PC-9 (cell line): ENCODE measurements at regions of chr2 and their contacts with region 1.

Region 1: DNA sequence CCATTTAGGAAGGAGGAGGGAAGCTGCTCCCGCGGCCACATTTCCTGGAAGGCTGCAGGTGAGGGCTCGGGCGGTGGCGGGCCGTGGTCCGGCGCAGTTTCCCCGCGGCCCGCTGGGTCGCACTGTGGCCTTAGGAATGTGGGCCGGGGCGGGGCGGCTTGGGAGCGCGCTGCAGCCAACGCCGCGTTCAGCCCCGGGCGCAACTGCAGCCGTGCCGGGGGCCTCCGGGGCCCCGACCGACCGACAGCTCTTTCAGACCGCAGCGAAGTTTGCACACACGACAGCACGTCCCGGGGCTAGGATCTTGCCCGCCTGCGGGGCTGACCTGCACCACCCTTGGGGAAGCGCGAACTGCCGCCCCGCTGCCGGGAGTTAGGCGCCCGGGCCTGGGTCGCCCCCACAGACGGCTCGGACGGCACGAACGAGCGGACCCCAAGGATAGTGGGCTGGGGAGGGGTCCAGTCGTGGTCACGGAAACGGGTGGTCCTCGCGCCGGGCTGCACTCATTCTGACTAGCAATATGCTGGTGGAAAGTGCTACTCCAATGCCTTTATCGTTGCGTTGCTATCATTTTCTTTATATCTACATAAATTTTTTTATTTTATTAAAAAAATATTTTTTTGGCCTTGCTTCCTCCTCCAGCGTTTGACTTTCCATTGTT is 69.9 kb upstream of the DLX2 start:
- DNase-seq: peak; percentile 75 to 98
- H3K4me3 ChIP-seq: peak overlapping the region; percentile 76
- H3K27ac ChIP-seq: no peak overlapping the region
- H3K4me1 ChIP-seq: peaks cover 17% of the 10 kb centered on the region
- H3K27me3 ChIP-seq: no peaks in the 10 kb centered on the region
- CTCF ChIP-seq: peak; percentile 98

Region 2: DNA sequence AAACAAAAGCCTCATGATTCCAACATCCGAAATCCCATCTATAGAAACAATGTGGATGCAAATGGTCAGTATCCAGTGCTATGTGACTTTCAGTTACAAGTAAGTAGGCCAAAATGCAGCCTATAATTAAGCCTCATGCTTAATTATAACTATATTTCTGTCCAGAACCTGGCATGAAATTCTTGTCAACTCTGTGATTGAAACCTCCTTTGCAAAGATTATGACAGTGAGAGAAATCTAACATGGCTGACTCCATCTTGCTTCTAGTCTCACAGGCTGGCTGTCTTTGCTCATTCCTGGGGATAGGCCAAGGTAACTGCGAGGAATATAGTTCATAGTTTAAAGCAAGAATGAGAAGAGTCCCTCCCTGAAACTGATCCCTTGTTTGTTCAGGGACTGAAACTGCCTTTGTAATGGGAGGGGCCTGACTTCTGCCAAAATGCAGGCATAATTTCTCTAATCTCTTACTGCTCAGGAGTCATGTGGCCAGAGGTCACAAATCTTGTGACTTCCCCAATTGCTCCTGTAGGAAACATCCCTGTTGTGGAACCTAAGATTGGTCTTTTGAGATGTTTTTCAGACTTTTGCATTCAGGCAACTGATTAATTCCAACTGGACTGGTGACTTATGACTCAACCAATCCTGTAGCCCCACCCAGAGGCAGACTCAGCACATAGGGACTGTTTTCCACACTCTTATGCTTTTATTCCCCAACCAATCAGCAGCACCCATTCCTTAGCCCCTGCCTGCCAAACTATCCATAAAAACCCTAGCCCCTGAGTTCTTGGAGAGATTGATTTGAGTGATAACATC is 927.5 kb before region 1 on chr2:
- CTCF ChIA-PET with region 1: no interaction called
- POLR2A ChIA-PET with region 1: interaction called, 10 read pairs
- intact Hi-C with region 1: no loop called
- DNase-seq: peak; percentile 13 to 67
- H3K4me3 ChIP-seq: no peak overlapping the region
- H3K27ac ChIP-seq: peak overlapping the region; percentile 99
- H3K4me1 ChIP-seq: peaks cover 26% of the 10 kb centered on the region
- H3K27me3 ChIP-seq: no peaks in the 10 kb centered on the region
- CTCF ChIP-seq: no peak

Region 3: GRCh38 chr2:171334171-171334570 is 838.5 kb before region 1 on chr2:
- CTCF ChIA-PET with region 1: no interaction called
- POLR2A ChIA-PET with region 1: no interaction called
- intact Hi-C with region 1: no loop called
- DNase-seq: no peak
- H3K4me3 ChIP-seq: no peak overlapping the region
- H3K27ac ChIP-seq: no peak overlapping the region
- H3K4me1 ChIP-seq: peaks cover 6% of the 10 kb centered on the region
- H3K27me3 ChIP-seq: no peaks in the 10 kb centered on the region
- CTCF ChIP-seq: no peak

Region 4: GRCh38 chr2:172208791-172209325 is 36.2 kb after region 1 on chr2:
- CTCF ChIA-PET with region 1: interaction called, 10 read pairs
- POLR2A ChIA-PET with region 1: no interaction called
- intact Hi-C with region 1: loop called (anchors 1 kb)
- DNase-seq: peak; percentile 53 to 100
- H3K4me3 ChIP-seq: no peak overlapping the region
- H3K27ac ChIP-seq: peak overlapping the region; percentile 60
- H3K4me1 ChIP-seq: peaks cover 30% of the 10 kb centered on the region
- H3K27me3 ChIP-seq: no peaks in the 10 kb centered on the region
- CTCF ChIP-seq: peak; percentile 46; the same call in 1 of the 2 replicates

Region 5: DNA sequence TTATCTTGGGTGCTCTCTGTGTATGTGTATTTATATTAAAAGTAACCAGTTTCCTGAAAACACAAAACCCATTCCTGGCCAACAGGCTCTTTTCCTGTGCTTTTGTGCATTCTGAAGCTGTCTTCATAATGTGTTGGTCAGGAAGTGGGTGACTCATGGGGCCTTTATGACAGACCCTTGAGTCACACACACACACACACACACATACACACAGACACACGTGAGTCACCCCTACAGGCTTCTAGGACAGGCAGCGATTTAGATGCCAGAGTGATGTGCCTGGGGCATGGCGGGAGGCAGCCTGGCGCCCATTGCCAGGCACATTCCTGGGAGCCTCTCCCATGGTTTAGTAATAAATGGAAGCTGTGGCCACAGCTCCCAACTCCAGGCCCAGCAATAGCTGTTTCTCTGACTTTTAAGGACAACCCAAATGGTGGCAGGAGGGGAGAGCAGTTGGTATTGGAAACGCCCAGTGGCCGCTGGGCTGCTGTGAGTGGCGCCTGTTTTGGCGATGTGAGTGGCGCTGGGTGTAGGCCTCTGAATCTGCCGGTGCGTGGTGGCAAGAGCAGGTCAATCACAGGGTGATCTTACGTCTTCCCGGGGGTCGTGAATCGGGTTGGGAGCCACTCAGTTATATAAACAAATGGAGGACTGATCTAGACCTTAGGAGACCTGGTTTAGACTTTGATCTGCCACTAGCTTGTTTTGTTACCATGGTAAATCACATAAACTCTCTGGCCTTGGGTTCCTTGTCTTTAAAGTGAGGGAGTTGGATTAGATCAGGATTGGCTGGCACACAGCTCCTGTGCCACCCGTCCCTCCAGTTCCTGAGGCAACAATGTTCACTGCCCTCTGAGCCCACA is 80.8 kb after region 1 on chr2:
- CTCF ChIA-PET with region 1: interaction called, 6 read pairs
- POLR2A ChIA-PET with region 1: interaction called, 8 read pairs
- intact Hi-C with region 1: loop called (anchors 1 kb)
- DNase-seq: peak; percentile 99 to 100
- H3K4me3 ChIP-seq: no peak overlapping the region
- H3K27ac ChIP-seq: peak overlapping the region; percentile 65
- H3K4me1 ChIP-seq: peaks cover 62% of the 10 kb centered on the region
- H3K27me3 ChIP-seq: no peaks in the 10 kb centered on the region
- CTCF ChIP-seq: no peak

Region 6: GRCh38 chr2:172484253-172484652 is 311.6 kb after region 1 on chr2:
- CTCF ChIA-PET with region 1: interaction called, 12 read pairs
- POLR2A ChIA-PET with region 1: no interaction called
- intact Hi-C with region 1: loop called (anchors 1 kb)
- DNase-seq: no peak
- H3K4me3 ChIP-seq: no peak overlapping the region
- H3K27ac ChIP-seq: no peak overlapping the region
- H3K4me1 ChIP-seq: 0 out of 2 replicates have a peak, but pooled peaks cover 5% of the 10 kb centered on the region
- H3K27me3 ChIP-seq: no peaks in the 10 kb centered on the region
- CTCF ChIP-seq: peak; percentile 89

Region 7: DNA sequence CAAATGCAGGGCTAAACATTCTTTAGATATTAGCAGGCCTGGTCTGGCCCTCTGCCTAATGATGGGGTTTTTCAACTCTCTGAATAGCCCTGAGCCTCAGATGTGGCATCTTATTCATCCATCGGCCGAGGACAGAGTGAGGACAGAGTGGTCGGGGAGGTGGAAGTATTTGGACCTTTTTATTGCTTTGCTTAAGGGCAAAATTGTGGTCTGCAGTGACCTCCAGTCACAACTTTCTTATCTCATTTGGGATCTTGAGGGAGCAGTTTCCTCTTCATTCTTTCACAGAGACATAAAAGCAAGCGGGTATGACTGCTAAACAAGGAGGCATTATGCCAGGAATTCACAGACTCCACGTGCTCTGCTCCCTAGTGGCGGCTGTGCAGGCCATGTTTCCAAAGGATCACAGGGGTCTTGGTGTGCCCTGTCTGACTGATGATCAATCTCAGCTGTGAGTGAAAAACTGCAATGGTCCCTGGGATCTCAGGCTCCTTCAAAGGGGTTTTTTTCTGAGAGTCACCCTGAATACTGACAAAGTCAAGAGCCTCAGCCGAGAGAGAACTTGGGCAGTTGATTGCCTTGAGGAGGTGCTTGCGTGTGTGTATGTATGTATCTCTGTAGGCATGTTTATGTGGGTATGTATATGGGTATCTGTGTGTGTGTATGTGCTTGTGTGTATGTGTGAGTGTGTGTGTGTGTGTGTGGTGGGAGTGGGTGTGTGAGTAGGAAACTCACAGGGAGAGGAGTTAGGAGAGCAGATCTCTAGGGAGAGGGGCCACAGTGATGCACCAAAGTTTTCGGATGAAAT is 610.7 kb after region 1 on chr2:
- CTCF ChIA-PET with region 1: no interaction called
- POLR2A ChIA-PET with region 1: no interaction called
- intact Hi-C with region 1: loop called (anchors 1 kb)
- DNase-seq: peak; percentile 95 to 100
- H3K4me3 ChIP-seq: no peak overlapping the region
- H3K27ac ChIP-seq: peak overlapping the region; percentile 72
- H3K4me1 ChIP-seq: peaks cover 33% of the 10 kb centered on the region
- H3K27me3 ChIP-seq: no peaks in the 10 kb centered on the region
- CTCF ChIP-seq: no peak; the same call in 1 of the 2 replicates